Activated CD4-positive, alpha-beta T cell treated with anti-CD3 and anti-CD28 coated beads, Interleukin-2, amount 10 ng/mL, durations not matched to agents 24 days and 14 days (primary cell): ENCODE measurements at regions of chr1 and their contacts with region 1.

Region 1: GRCh38 chr1:51519048-51519864 is at the start of gene EPS15:
- DNase-seq: peak; percentile 95
- H3K4me3 Mint-ChIP-seq: peak within 1 kb of the TSS; percentile 88
- H3K27ac Mint-ChIP-seq: peak within 1 kb of the TSS; percentile 89
- H3K4me1 Mint-ChIP-seq: peaks cover 48% of the 10 kb centered on the region
- H3K27me3 Mint-ChIP-seq: no peaks in the 10 kb centered on the region
- total RNA-seq, gene EPS15: 55.0 and 62.6 TPM in 2 replicates

Region 2: DNA sequence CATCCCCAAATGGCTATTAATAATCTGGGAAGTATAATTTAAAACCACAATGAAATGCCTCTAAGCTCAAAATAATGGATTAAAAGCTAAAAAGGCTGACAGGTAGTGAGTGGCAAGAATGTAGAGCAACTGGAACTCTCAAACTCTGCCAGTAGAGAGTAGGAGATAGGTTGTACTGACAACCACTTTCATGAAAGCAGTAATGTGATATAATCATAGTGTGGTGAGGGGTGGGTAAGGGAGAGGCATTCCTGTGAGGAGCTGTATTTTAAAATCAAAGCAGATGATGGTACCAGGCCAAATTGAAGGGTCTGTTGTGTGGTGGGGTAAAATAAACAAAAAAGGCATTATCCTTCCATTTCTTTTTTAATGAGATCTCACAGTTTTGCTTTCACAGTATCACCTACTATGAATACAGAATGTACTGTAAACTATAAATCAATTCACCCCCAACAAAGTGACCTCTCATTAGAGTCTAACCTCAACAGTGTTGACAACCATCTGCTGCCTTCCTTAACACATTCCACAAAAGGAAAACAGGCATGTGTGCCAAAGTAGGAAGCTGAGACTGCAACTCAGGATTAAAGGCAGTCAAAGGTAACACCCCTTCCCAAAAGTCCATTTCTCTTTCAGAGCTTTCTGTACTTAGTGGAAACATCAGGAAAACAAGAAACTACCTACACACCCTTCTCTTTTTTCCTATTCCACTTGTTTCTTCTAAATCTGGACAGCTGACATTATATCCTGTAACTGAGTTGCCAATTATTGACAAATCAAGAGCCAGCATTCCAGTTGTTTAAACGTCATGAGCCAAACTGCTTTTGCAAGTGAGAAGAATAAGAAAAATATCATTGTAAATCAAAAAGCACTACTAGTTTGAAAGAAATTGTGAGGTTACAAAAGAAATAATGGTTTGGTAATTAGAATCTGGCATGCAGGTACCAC is 690.0 kb before region 1 on chr1:
- intact Hi-C with region 1: no loop called
- DNase-seq: no peak
- H3K4me3 Mint-ChIP-seq: no peak overlapping the region
- H3K27ac Mint-ChIP-seq: no peak overlapping the region
- H3K4me1 Mint-ChIP-seq: peaks cover 5% of the 10 kb centered on the region
- H3K27me3 Mint-ChIP-seq: no peaks in the 10 kb centered on the region

Region 3: DNA sequence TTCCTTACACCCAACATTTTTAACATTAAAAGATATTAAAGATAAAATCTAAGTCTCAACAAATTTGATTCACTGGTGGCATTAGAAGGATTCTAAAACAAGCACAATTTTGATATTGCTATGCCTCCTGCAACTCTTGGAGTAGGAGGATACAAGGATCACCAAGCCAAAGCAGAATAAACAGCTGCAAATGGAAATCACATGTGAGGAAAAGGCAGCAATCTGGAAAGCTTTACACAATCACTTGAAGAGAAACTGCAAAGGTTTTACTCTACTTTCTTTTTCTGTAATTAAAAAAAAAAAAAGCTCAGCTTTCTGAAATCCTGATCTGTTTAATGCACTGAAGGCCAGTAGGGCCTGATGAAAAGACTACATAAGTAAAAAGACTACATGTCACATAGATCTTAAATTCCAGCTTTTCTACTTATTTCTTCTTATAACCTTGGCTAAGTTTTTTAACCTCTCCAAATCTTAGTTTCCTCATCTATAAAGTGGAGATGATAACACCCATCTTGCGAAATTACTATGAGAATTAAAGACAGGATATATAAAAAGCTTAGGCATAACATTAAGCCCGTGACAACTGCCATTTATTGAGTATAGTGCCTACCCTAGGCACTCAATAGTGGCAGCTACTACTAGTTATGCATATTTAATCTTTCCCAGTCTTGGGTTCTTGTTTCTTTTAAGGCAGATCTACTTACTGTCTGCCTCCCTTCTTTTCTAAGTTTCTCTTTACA is 73.7 kb before region 1 on chr1:
- intact Hi-C with region 1: loop called (anchors 5 kb)
- DNase-seq: no peak
- H3K4me3 Mint-ChIP-seq: no peak overlapping the region
- H3K27ac Mint-ChIP-seq: no peak overlapping the region
- H3K4me1 Mint-ChIP-seq: peaks cover 20% of the 10 kb centered on the region
- H3K27me3 Mint-ChIP-seq: no peaks in the 10 kb centered on the region

Region 4: DNA sequence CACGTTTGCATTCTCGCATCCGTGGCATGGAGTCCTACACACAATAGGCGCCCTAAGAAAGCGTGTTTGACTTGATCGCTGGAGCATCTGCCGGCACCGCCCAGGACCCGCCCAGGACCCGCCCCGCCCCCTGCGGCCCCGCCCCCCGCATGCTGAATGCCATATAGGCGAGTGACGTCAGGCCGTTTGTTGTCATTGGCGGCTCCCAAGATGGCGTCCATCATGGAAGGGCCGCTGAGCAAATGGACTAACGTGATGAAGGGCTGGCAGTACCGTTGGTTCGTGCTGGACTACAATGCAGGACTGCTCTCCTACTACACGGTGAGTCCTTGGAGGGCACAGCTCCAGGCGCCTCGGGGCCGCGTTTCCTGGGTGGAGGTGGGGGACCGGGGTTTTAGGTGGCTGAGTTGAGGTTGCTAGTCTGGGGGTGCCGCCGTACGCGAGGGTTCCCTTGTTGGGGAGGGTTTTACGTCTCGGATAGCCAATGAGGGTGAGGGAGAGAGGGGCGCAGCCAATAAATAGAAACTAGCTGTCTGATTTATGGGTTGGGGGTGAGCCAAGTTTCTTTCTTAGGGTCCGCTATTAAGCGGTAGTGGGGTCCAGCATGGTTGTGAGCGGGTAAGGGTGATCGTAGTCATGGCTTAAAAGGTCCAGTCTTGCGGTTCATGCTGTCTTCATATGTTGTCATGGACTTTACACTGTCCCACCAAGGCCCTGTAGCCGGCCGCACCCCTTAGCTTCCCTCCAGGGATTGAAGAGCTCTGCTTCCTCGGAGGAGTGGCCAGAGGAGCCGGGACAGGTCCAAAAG is 97.8 kb after region 1 on chr1 and contains the start of gene OSBPL9:
- intact Hi-C with region 1: loop called (anchors 5 kb)
- DNase-seq: peak; percentile 95
- H3K4me3 Mint-ChIP-seq: peak within 1 kb of the TSS; percentile 99
- H3K27ac Mint-ChIP-seq: peak within 1 kb of the TSS; percentile 97
- H3K4me1 Mint-ChIP-seq: peaks cover 23% of the 10 kb centered on the region
- H3K27me3 Mint-ChIP-seq: peaks cover 6% of the 10 kb centered on the region
- total RNA-seq, gene OSBPL9: 47.4 and 47.9 TPM in 2 replicates

Region 5: GRCh38 chr1:51878616-51879336 is 359.5 kb after region 1 on chr1 and contains the start of gene NRDC:
- intact Hi-C with region 1: loop called (anchors 5 kb)
- DNase-seq: peak; percentile 100
- H3K4me3 Mint-ChIP-seq: no peak within 1 kb of the TSS
- H3K27ac Mint-ChIP-seq: no peak within 1 kb of the TSS
- H3K4me1 Mint-ChIP-seq: peaks cover 28% of the 10 kb centered on the region
- H3K27me3 Mint-ChIP-seq: peaks cover 8% of the 10 kb centered on the region
- total RNA-seq, gene NRDC: 170 and 175 TPM in 2 replicates